HepG2 (cell line): ENCODE measurements at regions of chr15 and their contacts with region 1.

Region 1: DNA sequence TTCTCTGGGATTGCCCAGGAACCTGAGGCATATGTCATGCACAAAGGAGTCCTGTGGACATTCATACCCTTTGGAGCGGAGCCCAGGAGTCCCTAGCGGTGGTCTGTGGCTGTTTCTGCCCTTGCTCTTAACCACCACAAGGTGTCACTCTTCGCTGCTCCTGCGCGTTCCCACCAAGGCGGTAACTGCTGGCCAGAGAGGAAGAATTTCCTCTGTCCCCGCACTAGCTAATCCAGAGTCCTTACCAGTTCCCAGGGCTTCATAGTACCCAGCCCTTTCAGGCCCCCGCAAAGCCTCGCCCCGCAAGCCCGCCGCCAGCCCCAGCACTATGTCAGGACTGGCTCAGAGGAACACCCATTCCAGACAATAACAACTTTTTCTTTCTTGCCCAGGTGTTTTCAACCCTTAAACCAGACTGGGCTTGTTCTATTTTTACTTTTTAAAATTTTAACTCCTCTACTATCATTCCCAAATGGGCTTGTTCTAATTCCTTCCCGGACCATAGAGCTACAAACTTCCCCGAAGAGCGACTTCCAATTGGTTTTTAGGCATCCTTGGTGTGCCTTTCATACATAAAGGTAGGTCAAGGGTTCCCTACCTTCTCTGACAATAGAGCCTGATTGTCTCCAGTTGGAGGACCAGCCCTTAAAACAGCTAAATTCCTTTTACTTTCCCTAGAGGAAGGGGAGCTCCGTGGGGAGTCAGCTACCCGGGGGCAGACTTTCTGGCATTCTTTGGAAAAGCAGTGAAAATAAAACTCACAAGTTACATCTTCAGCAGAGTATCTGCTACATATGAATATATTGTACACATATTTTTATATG is 31.8 kb upstream of the ZNF774 start:
- DNase-seq: peak; percentile 84
- ATAC-seq: peak; percentile 99
- H3K4me3 ChIP-seq: peak overlapping the region in 2 of 3 experiments; percentile 15 to 32; a peak in 2 of 6 replicates
- H3K27ac ChIP-seq: no peak overlapping the region
- H3K4me1 ChIP-seq: 0 out of 2 replicates have a peak, but pooled peaks cover 7% of the 10 kb centered on the region
- H3K27me3 ChIP-seq: no peaks in the 10 kb centered on the region
- CTCF ChIP-seq: peak; percentile 98
- EP300 ChIP-seq: no peak
- POLR2A ChIP-seq: no peak
- RAD21 ChIP-seq: peak; percentile 94

Region 2: DNA sequence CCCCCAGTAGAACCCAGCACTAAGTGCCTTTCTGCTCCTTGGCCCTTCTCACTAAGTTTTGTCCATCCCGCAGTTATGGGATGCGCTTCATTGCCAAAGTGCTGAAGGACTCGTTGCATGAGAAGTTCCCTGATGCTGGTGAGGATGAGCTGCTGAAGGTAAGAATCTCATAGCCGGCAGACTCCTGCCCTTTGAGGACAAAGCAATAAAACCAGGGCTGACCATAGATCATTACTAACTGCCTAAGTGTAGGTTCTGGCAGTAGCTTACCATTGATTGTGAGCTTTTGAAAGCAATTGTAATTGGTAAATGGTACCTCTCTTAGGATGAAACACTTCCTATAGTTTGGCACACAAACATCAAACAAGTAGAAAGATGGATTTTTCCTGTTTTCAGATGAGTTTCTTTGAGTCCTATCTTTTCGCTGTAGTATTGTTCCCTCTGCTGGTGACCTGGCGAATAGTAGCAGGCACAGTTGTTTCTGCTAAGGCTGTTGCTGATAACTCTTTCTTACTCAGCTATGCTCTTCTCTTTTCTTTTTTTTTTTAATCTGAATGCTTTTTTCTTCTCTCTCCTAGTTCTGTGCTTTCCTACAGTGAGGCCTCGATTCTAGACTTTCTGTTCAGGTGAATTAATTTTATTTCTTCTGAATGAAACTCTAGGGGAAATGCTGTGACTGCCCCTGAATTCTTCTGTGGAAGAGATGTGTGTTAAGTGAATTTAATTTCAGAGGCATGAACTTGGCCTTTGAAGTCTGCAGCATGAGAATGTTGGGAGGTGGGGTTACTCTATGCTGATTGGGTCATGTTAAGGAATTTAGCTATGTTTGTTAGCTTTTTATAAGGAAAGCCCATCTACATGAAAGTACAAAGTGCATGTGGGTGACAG is 162.1 kb after region 1 on chr15:
- CTCF ChIA-PET with region 1: interaction called, 55 read pairs
- POLR2A ChIA-PET with region 1: no interaction called
- in situ Hi-C with region 1: loop called (anchors 5 kb)
- intact Hi-C with region 1: loop called (anchors 1 kb)
- DNase-seq: peak; percentile 80
- ATAC-seq: peak; percentile 80
- H3K4me3 ChIP-seq: no peak overlapping the region; a peak in 1 of 6 replicates
- H3K27ac ChIP-seq: no peak overlapping the region
- H3K4me1 ChIP-seq: peaks cover 32% of the 10 kb centered on the region
- H3K27me3 ChIP-seq: no peaks in the 10 kb centered on the region
- CTCF ChIP-seq: peak; percentile 83
- EP300 ChIP-seq: no peak
- POLR2A ChIP-seq: no peak
- RAD21 ChIP-seq: peak; percentile 79

Region 3: DNA sequence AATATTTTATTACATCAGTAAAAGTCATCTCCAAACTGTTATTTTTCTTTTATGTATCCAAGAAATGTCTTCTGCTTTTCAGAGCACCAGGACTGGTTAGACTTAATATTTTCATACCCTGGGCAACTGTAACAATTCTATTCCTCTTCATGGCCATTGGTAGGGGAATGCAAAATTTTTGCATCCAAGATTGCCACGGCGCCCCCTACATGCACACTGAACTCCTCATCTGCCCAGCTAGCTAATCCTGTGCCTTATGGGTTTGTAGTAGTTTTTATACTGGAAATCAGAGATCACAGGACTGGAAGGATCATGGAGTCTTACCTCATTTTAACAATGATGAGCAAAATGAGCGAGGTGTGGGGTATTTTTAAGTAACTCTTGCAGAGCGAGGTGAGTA is 283.6 kb after region 1 on chr15:
- CTCF ChIA-PET with region 1: interaction called, 5 read pairs
- POLR2A ChIA-PET with region 1: no interaction called
- in situ Hi-C with region 1: no loop called
- intact Hi-C with region 1: loop called (anchors 5 kb)
- DNase-seq: no peak
- ATAC-seq: peak; percentile 51; the same call in 2 of the 3 replicates
- H3K4me3 ChIP-seq: no peak overlapping the region
- H3K27ac ChIP-seq: no peak overlapping the region
- H3K4me1 ChIP-seq: no peaks in the 10 kb centered on the region
- H3K27me3 ChIP-seq: no peaks in the 10 kb centered on the region
- CTCF ChIP-seq: peak; percentile 50
- EP300 ChIP-seq: no peak
- POLR2A ChIP-seq: no peak
- RAD21 ChIP-seq: no peak

Region 4: GRCh38 chr15:90691982-90692773 is 371.9 kb after region 1 on chr15:
- CTCF ChIA-PET with region 1: interaction called, 4 read pairs
- POLR2A ChIA-PET with region 1: no interaction called
- in situ Hi-C with region 1: no loop called
- intact Hi-C with region 1: loop called (anchors 1 kb)
- DNase-seq: no peak
- ATAC-seq: no peak
- H3K4me3 ChIP-seq: no peak overlapping the region
- H3K27ac ChIP-seq: no peak overlapping the region
- H3K4me1 ChIP-seq: no peaks in the 10 kb centered on the region
- H3K27me3 ChIP-seq: no peaks in the 10 kb centered on the region
- CTCF ChIP-seq: no peak
- EP300 ChIP-seq: no peak
- POLR2A ChIP-seq: no peak
- RAD21 ChIP-seq: no peak